Activated CD4-positive, alpha-beta T cell treated with anti-CD3 and anti-CD28 coated beads for 36 hours (primary cell): ENCODE measurements at regions of chr3 and their contacts with region 1.

Region 1: GRCh38 chr3:50405249-50405648 is 45.9 kb upstream of the TMEM115 start:
- DNase-seq: peak; percentile 61
- ATAC-seq: no peak
- H3K4me3 Mint-ChIP-seq: no peak overlapping the region
- H3K27ac Mint-ChIP-seq: no peak overlapping the region
- H3K4me1 Mint-ChIP-seq: no peaks in the 10 kb centered on the region
- H3K27me3 Mint-ChIP-seq: no peaks in the 10 kb centered on the region

Region 2: GRCh38 chr3:50044976-50045375 is 360.3 kb before region 1 on chr3:
- CTCF ChIA-PET with region 1: no interaction called
- POLR2A ChIA-PET with region 1: no interaction called
- intact Hi-C with region 1: no loop called
- DNase-seq: no peak
- ATAC-seq: peak; percentile 53
- H3K4me3 Mint-ChIP-seq: no peak overlapping the region
- H3K27ac Mint-ChIP-seq: no peak overlapping the region
- H3K4me1 Mint-ChIP-seq: peaks cover 15% of the 10 kb centered on the region
- H3K27me3 Mint-ChIP-seq: no peaks in the 10 kb centered on the region

Region 3: DNA sequence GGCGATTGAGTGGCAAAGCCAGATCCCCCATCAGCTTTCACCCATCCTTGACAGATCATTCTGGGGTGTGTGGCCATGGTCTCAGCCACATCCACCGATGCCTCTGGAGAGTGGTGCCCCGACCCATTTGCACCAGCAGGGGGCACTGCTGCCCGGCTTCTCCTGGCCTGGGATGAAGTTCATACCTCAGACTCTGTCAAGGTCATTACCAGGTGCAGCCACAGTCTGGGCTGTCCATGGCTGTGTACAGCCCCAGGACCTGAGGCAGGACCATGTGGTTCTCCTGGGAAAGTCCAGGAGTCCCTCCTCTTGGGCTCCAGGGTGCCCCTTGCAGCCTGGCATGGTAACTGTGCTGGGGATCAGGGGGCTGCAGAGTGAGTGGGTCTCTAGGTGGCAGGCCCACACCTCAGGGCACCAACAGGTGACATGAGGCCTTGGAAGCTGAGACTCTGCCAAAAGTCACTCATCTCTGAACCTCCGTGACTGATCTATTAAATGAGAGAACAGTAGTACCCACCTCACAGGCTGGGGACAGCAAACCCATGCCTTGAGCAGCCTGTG is 30.9 kb after region 1 on chr3:
- CTCF ChIA-PET with region 1: no interaction called
- POLR2A ChIA-PET with region 1: no interaction called
- intact Hi-C with region 1: no loop called
- DNase-seq: peak; percentile 89
- ATAC-seq: peak; percentile 98
- H3K4me3 Mint-ChIP-seq: no peak overlapping the region
- H3K27ac Mint-ChIP-seq: no peak overlapping the region
- H3K4me1 Mint-ChIP-seq: no peaks in the 10 kb centered on the region
- H3K27me3 Mint-ChIP-seq: peaks cover 3% of the 10 kb centered on the region

Region 4: DNA sequence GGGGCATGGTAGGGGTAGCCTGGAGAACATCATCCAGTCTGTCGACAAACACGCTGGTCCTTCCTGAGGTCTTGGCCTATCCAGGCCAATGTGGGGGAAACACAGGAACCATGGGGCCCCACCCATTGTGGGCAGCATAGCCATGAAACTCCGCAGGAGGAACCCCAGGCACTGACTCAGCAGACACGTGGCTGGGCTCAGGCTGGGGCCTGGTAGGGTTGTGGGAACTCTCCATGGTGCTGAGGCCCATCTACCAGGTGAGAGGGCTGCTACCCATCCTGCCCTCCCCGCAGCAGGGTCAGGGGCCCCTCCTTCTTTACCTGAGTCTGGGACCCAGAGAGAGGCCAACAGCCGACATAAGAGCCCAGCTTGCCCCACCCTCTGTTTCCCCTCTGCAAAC is 120.7 kb after region 1 on chr3:
- CTCF ChIA-PET with region 1: no interaction called
- POLR2A ChIA-PET with region 1: no interaction called
- intact Hi-C with region 1: loop called in 1 of 2 experiments (anchors 2 kb)
- DNase-seq: peak; percentile 89
- ATAC-seq: peak; percentile 97
- H3K4me3 Mint-ChIP-seq: no peak overlapping the region
- H3K27ac Mint-ChIP-seq: no peak overlapping the region
- H3K4me1 Mint-ChIP-seq: peaks cover 4% of the 10 kb centered on the region
- H3K27me3 Mint-ChIP-seq: peaks cover 15% of the 10 kb centered on the region

Region 5: GRCh38 chr3:50913260-50913659 is 508.0 kb after region 1 on chr3:
- CTCF ChIA-PET with region 1: no interaction called
- POLR2A ChIA-PET with region 1: no interaction called
- intact Hi-C with region 1: no loop called
- DNase-seq: no peak
- ATAC-seq: no peak
- H3K4me3 Mint-ChIP-seq: no peak overlapping the region
- H3K27ac Mint-ChIP-seq: no peak overlapping the region
- H3K4me1 Mint-ChIP-seq: no peaks in the 10 kb centered on the region
- H3K27me3 Mint-ChIP-seq: peaks cover 12% of the 10 kb centered on the region